GM12878 (cell line): ENCODE measurements at regions of chr7 and their contacts with region 1.

Region 1: DNA sequence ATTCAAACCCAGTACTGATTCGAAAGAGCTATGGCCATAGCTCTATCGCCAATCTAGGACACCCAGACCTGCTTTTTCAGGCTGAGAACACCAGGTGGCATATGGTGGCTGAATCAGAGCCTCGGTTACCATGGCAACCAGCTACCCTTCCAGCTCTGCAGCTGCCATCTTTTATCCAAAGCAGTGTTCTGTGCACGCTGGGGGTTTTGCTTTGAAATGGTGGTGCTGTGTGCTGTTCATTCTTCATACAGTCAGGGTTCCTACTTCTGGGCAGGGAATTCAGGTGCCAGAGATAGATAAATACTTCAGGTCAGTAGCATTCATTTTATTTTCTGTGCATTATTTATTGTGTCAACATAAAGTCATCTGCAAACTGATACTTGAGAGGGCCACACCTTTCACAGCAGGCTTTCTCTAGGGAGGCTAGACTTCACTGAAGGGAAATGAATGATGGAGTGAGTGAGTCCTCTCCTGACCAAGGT is 85.4 kb downstream of the AKR1D1 start:
- DNase-seq: peak; percentile 76
- ATAC-seq: peak; percentile 100
- H3K4me3 ChIP-seq: no peak overlapping the region
- H3K27ac ChIP-seq: no peak overlapping the region
- H3K4me1 ChIP-seq: peaks cover 5% of the 10 kb centered on the region
- H3K27me3 ChIP-seq: no peaks in the 10 kb centered on the region
- CTCF ChIP-seq: peak; percentile 70 to 91 (median 85)
- EP300 ChIP-seq: no peak
- POLR2A ChIP-seq: no peak
- RAD21 ChIP-seq: peak; percentile 81

Region 2: GRCh38 chr7:138449580-138449979 is 287.9 kb after region 1 on chr7:
- CTCF ChIA-PET with region 1: interaction called, 20 read pairs
- POLR2A ChIA-PET with region 1: interaction called, 3 read pairs
- RAD21 ChIA-PET with region 1: interaction called, 8 read pairs
- SMC1A ChIA-PET with region 1: no interaction called
- in situ Hi-C with region 1: no loop called
- intact Hi-C with region 1: no loop called
- DNase-seq: no peak
- ATAC-seq: peak; percentile 54
- H3K4me3 ChIP-seq: no peak overlapping the region
- H3K27ac ChIP-seq: no peak overlapping the region
- H3K4me1 ChIP-seq: no peaks in the 10 kb centered on the region
- H3K27me3 ChIP-seq: no peaks in the 10 kb centered on the region
- CTCF ChIP-seq: peak; percentile 31 to 69 (median 55)
- EP300 ChIP-seq: no peak
- POLR2A ChIP-seq: no peak
- RAD21 ChIP-seq: peak; percentile 60

Region 3: DNA sequence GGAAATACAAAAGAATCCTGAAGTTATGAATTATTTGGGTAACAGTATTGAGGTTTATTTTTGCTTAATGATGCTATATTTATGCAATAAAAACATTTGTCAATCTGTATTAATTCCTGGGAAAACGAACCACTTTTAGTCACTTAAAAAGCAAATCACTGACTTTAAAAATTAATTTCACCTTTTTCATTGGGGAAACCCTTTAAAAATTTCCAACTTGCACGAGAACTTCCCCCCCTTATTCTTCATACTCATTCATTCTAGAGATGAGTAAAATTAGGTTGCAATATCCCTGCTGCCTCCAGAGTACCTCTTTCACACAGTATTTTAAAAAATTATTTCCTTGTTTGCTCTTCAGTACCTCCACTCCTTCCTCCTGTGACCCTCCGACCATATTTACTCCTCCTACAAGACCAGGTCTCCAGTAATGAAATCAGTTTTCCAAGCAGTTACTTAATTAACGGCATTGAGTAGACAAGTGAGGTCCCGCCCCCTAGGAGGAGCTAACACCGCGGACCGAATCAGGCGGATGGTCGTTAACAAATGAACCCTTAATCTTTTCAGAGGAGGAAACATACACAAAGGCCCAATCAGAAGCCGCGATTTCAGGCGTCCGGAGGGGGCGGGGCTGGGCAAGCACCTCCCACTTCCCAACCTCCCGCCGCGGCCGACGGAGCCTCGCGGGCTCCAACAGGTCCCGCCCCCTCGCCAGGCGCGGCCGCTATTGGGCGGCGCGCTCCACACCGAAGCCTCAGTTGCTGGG is 298.0 kb after region 1 on chr7:
- CTCF ChIA-PET with region 1: no interaction called
- POLR2A ChIA-PET with region 1: interaction called, 3 read pairs
- RAD21 ChIA-PET with region 1: interaction called, 6 read pairs
- SMC1A ChIA-PET with region 1: interaction called, 13 read pairs
- in situ Hi-C with region 1: no loop called
- intact Hi-C with region 1: loop called (anchors 5 kb)
- DNase-seq: peak; percentile 92
- ATAC-seq: peak; percentile 89
- H3K4me3 ChIP-seq: peak overlapping the region; percentile 48; the same call in 1 of the 2 replicates
- H3K27ac ChIP-seq: peak overlapping the region; percentile 55
- H3K4me1 ChIP-seq: no peaks in the 10 kb centered on the region
- H3K27me3 ChIP-seq: no peaks in the 10 kb centered on the region
- CTCF ChIP-seq: peak in 2 of 3 experiments; percentile 4 to 23; a peak in 1 of 6 replicates
- EP300 ChIP-seq: no peak
- POLR2A ChIP-seq: no peak
- RAD21 ChIP-seq: 0 out of 2 replicates have a peak, but pooled peaks have one; percentile 1

Region 4: DNA sequence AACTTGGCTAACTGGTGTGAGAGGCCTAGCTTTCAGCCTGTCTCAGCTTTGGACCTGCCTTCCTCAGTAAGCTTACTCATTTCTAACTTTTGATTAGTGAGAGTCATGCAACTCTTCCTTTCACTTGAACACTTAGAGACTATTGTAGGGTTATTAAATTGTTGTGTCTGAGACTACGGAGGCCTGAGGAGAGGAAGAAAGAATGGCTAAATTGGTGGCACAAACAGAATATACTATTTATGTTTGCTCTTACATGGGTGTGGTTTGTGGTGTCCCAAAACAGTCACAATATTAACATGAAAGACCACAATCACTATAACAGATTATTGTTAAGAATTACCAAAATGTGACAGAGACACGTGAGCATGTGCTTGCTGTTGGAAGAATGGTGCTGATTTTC is 380.5 kb after region 1 on chr7:
- CTCF ChIA-PET with region 1: interaction called, 3 read pairs
- POLR2A ChIA-PET with region 1: no interaction called
- RAD21 ChIA-PET with region 1: no interaction called
- SMC1A ChIA-PET with region 1: interaction called, 3 read pairs
- in situ Hi-C with region 1: no loop called
- intact Hi-C with region 1: loop called (anchors 10 kb)
- DNase-seq: peak; percentile 62
- ATAC-seq: peak; percentile 95
- H3K4me3 ChIP-seq: no peak overlapping the region
- H3K27ac ChIP-seq: peak overlapping the region; percentile 37; the same call in 1 of the 2 replicates
- H3K4me1 ChIP-seq: peaks cover 9% of the 10 kb centered on the region
- H3K27me3 ChIP-seq: no peaks in the 10 kb centered on the region
- CTCF ChIP-seq: no peak
- EP300 ChIP-seq: peak; percentile 51 to 54; a peak in 2 of 4 replicates
- POLR2A ChIP-seq: no peak
- RAD21 ChIP-seq: no peak

Region 5: GRCh38 chr7:138865843-138866242 is 704.2 kb after region 1 on chr7:
- CTCF ChIA-PET with region 1: interaction called, 3 read pairs
- POLR2A ChIA-PET with region 1: no interaction called
- RAD21 ChIA-PET with region 1: no interaction called
- SMC1A ChIA-PET with region 1: no interaction called
- in situ Hi-C with region 1: no loop called
- intact Hi-C with region 1: loop called (anchors 1 kb)
- DNase-seq: peak; percentile 4
- ATAC-seq: peak; percentile 84
- H3K4me3 ChIP-seq: no peak overlapping the region
- H3K27ac ChIP-seq: no peak overlapping the region
- H3K4me1 ChIP-seq: no peaks in the 10 kb centered on the region
- H3K27me3 ChIP-seq: no peaks in the 10 kb centered on the region
- CTCF ChIP-seq: peak; percentile 44 to 62 (median 48); a peak in 5 of 6 replicates
- EP300 ChIP-seq: no peak
- POLR2A ChIP-seq: no peak
- RAD21 ChIP-seq: peak; percentile 75